ENCODE measurements at regions of chr16 and their contacts with region 1.

Region 1: GRCh38 chr16:57821149-57821986 is 19.1 kb upstream of the KIFC3 start:
- DNase-seq: peak; percentile 86 to 88
- H3K4me3 ChIP-seq: no peak overlapping the region
- H3K4me3 Mint-ChIP-seq: peak overlapping the region; percentile 40
- H3K27ac Mint-ChIP-seq: peak overlapping the region; percentile 93
- H3K4me1 ChIP-seq: peaks cover 88% of the 10 kb centered on the region
- H3K4me1 Mint-ChIP-seq: peaks cover 80% of the 10 kb centered on the region
- H3K27me3 ChIP-seq: no peaks in the 10 kb centered on the region
- H3K27me3 Mint-ChIP-seq: no peaks in the 10 kb centered on the region
- CTCF ChIP-seq: no peak

Region 2: DNA sequence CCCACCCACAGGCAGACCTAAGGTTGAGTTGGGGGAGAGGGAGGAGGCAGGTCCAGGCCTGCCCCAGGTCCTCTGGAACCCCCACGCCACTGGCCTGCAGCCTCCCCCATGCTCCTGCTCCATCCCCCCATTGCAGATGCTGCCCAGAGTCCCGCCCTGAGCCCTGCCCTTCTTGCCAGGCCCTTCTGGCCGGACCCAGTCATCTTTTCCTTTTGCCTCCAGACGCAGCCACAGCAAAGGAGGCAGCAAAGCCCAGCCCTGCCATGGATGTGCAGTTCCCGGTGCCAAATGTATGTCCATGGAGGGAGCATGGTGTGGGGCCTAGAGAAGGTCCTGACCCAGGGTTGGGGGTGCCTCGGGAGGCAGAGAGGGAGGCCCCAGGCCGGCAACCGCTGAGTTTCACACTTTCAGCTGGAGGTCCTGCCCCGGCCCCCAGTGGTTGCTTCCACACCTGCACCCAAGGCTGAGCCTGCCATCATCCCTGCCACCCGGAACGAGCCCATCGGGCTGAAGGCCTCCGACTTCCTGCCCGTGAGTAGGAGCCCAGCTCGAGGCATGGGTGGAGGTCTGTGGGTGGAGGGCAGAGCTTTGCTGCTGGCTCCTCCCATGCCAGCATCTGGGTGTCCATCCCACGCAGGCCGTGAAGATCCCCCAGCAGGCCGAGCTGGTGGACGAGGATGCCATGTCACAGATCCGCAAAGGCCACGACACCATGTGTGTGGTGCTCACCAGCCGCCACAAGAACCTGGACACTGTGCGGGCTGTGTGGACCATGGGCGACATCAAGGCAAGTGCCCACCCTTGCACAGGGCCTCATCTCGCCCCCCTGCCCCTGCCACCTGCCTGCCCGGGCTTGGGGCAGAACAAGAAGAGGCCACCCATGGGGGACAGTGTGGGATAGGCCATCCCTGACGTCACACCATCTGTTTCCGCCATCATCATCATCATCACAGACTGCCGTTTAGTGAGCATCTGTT is 66.4 kb before region 1 on chr16:
- CTCF ChIA-PET with region 1: no interaction called
- POLR2A ChIA-PET with region 1: no interaction called
- intact Hi-C with region 1: no loop called
- DNase-seq: no peak
- H3K4me3 ChIP-seq: no peak overlapping the region
- H3K4me3 Mint-ChIP-seq: no peak overlapping the region
- H3K27ac Mint-ChIP-seq: no peak overlapping the region
- H3K4me1 ChIP-seq: peaks cover 11% of the 10 kb centered on the region
- H3K4me1 Mint-ChIP-seq: peaks cover 16% of the 10 kb centered on the region
- H3K27me3 ChIP-seq: no peaks in the 10 kb centered on the region
- H3K27me3 Mint-ChIP-seq: no peaks in the 10 kb centered on the region
- CTCF ChIP-seq: no peak

Region 3: GRCh38 chr16:57810197-57811031 is 11.0 kb before region 1 on chr16:
- CTCF ChIA-PET with region 1: interaction called, 4 read pairs
- POLR2A ChIA-PET with region 1: interaction called, 8 read pairs
- intact Hi-C with region 1: loop called (anchors 1 kb)
- DNase-seq: peak; percentile 92 to 97
- H3K4me3 ChIP-seq: no peak overlapping the region
- H3K4me3 Mint-ChIP-seq: peak overlapping the region; percentile 51
- H3K27ac Mint-ChIP-seq: peak overlapping the region; percentile 93
- H3K4me1 ChIP-seq: peaks cover 86% of the 10 kb centered on the region
- H3K4me1 Mint-ChIP-seq: peaks cover 73% of the 10 kb centered on the region
- H3K27me3 ChIP-seq: no peaks in the 10 kb centered on the region
- H3K27me3 Mint-ChIP-seq: no peaks in the 10 kb centered on the region
- CTCF ChIP-seq: no peak

Region 4: DNA sequence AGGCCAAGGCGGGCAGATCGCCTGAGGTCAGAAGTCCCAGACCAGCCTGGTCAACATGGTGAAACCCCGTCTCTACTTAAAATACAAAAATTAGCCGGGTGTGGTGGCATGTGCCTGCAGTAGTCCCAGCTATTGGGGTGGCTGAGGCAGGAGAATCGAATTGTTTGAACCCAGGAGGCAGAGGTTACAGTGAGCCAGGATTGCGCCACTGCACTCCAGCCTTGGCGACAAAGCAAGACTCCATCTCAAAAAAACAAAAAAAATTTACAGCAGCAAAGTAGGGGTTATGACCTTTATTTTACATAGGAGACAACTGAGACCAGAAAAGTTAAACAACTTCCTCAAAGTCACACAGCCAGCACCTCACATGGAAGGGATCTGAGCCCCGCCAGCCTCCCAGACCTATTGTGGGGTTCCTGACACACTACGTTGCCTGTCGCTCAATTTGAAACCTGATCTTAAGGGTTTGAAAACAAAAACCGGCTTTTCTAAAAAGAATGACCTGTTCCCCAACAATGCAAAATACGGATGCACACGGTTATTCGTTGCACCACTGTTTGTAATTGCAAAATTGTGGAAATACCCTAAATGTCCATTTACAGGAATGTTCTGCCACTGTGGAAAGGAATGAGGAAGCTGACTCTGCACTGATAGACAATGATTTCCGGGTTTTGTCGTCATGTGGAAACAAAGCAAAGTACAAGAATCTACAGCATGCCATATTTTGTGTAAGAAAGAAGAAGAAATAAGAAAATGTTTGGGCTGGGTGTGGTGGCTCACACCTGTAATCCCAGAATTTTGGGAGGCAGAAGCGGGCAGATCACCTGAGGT is 72.4 kb after region 1 on chr16:
- CTCF ChIA-PET with region 1: no interaction called
- POLR2A ChIA-PET with region 1: no interaction called
- intact Hi-C with region 1: loop called (anchors 2 kb)
- DNase-seq: peak; percentile 73 to 74
- H3K4me3 ChIP-seq: no peak overlapping the region
- H3K4me3 Mint-ChIP-seq: peak overlapping the region; percentile 61
- H3K27ac Mint-ChIP-seq: peak overlapping the region; percentile 88
- H3K4me1 ChIP-seq: peaks cover 33% of the 10 kb centered on the region
- H3K4me1 Mint-ChIP-seq: peaks cover 42% of the 10 kb centered on the region
- H3K27me3 ChIP-seq: no peaks in the 10 kb centered on the region
- H3K27me3 Mint-ChIP-seq: no peaks in the 10 kb centered on the region
- CTCF ChIP-seq: no peak

Measured in Caco-2 (cell line).